K562 (cell line): ENCODE measurements at regions of chrX and their contacts with region 1.

Region 1: DNA sequence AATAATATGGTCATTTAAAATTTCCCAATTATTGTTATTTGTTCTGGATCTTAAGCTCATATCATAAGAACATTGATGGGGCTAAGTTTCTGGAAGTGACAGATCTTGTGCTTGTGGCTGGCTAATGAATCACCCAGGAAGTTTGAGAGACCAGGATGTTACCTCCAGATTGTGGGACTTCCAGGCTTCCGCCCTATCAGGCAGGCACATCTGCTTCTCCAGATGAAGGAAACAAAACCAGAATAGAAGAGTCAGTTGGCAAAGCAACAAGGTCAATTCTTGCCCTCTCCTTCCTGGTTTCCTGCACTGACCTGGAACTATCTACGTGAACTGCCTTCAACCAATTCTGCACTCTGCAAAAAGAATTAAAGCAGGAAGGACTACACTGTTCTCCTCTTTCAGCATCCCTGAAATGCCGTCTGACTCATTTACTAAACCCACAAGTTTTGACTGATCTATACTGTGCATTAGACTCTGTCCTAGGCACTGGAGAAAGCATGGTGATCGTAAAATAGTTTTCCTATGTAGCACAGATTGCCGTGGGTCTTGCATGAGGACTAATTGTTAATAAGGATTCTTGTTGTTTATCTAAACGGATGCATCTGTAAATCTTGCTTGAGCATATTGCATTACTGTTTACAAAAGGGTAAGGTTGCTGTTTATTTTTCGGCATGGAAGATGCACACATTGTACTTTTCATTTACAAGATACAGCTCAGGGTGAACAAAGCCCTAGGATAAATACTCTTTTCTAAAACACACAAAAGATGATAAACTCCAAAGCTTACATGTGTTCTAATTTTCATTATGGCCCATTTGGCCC is 74.6 kb downstream of the AMELX start:
- DNase-seq: peak; percentile 62 to 93 (median 66)
- ATAC-seq: peak; percentile 82
- H3K4me3 ChIP-seq: no peak overlapping the region
- H3K27ac ChIP-seq: peak overlapping the region; percentile 90
- H3K4me1 ChIP-seq: peaks cover 0 to 62% of the 10 kb centered on the region in 2 experiments; a peak in 3 of 5 replicates
- H3K27me3 ChIP-seq: no peaks in the 10 kb centered on the region
- CTCF ChIP-seq: no peak
- EP300 ChIP-seq: peak; percentile 99
- POLR2A ChIP-seq: peak; percentile 44; the same call in 1 of the 2 replicates
- RAD21 ChIP-seq: peak in 1 of 2 experiments; percentile 24; a peak in 2 of 4 replicates

Region 2: DNA sequence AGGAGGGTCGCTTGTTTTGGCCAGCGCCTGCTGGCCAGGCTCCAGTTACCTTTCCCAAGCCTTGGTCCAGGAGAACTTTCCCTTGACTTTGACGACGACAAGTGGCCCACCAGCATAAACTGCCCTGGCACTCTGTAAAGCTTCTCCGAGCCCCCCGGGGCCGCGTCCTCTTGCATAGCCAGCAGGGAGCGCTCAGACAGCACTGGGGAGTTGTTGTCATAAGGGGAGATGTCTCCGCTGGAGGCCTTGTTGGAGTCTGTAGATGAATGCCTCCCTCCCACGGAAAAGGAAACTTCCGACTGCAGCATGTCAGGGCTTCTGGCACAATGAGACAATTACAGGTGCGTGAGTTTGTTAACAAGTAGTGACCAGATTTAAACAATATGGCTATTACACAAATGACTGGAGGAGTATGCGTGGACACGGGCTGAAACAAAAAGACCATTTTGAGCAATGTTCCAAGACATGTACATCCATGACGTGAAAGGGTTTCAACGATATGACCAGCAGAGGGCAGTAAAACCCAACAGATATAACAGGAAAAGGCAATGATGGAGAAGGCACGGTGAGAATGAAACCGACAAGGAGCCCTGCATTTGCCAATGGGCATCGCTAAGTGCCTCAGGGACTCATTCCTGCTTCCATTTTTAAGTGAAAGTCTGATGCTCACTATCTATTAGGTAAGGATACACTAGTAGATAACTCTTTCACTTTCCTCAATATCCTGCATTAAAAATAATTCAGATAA is 223.7 kb before region 1 on chrX:
- CTCF ChIA-PET with region 1: interaction called, 5 read pairs
- POLR2A ChIA-PET with region 1: no interaction called
- in situ Hi-C with region 1: loop called (anchors 5 kb)
- intact Hi-C with region 1: loop called (anchors 5 kb)
- DNase-seq: peak; percentile 39 to 81 (median 53)
- ATAC-seq: peak; percentile 93
- H3K4me3 ChIP-seq: no peak overlapping the region
- H3K27ac ChIP-seq: no peak overlapping the region
- H3K4me1 ChIP-seq: no peaks in the 10 kb centered on the region; a peak in 2 of 5 replicates
- H3K27me3 ChIP-seq: no peaks in the 10 kb centered on the region
- CTCF ChIP-seq: peak; percentile 48 to 74 (median 65); a peak in 5 of 6 replicates
- EP300 ChIP-seq: no peak
- POLR2A ChIP-seq: no peak
- RAD21 ChIP-seq: peak; percentile 71 to 78

Region 3: GRCh38 chrX:11267425-11267824 is 100.4 kb before region 1 on chrX:
- CTCF ChIA-PET with region 1: no interaction called
- POLR2A ChIA-PET with region 1: no interaction called
- in situ Hi-C with region 1: no loop called
- intact Hi-C with region 1: loop called (anchors 5 kb)
- DNase-seq: no peak
- ATAC-seq: no peak
- H3K4me3 ChIP-seq: no peak overlapping the region
- H3K27ac ChIP-seq: no peak overlapping the region
- H3K4me1 ChIP-seq: peaks cover 15 to 76% of the 10 kb centered on the region in 2 experiments
- H3K27me3 ChIP-seq: no peaks in the 10 kb centered on the region
- CTCF ChIP-seq: no peak
- EP300 ChIP-seq: no peak
- POLR2A ChIP-seq: no peak
- RAD21 ChIP-seq: no peak

Region 4: DNA sequence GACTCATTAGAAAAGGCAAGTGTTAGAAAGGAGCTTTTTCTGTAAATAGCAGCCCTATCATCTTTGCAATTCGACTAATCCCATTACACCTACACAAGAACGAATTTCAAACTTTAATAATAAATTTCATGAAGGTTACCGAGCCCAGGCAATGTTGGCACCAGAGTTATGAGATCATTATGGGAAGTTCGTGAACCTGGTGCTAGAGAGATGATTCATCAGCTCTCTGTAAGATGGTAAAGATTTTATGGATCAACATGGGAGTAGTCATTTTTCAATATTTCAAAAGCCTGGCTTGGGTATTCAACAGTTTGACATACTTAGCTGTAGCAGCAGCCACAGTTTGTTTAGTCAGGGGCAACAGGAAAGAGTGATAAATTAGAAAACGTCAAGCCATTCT is 38.8 kb before region 1 on chrX:
- CTCF ChIA-PET with region 1: no interaction called
- POLR2A ChIA-PET with region 1: no interaction called
- in situ Hi-C with region 1: no loop called
- intact Hi-C with region 1: loop called (anchors 5 kb)
- DNase-seq: no peak
- ATAC-seq: no peak
- H3K4me3 ChIP-seq: no peak overlapping the region
- H3K27ac ChIP-seq: no peak overlapping the region; the same call in 2 of the 3 replicates
- H3K4me1 ChIP-seq: peaks cover 0 to 29% of the 10 kb centered on the region in 2 experiments; a peak in 3 of 5 replicates
- H3K27me3 ChIP-seq: no peaks in the 10 kb centered on the region
- CTCF ChIP-seq: no peak
- EP300 ChIP-seq: no peak
- POLR2A ChIP-seq: no peak
- RAD21 ChIP-seq: no peak

Region 5: GRCh38 chrX:11351375-11352295 is 16.2 kb before region 1 on chrX:
- CTCF ChIA-PET with region 1: no interaction called
- POLR2A ChIA-PET with region 1: no interaction called
- in situ Hi-C with region 1: no loop called
- intact Hi-C with region 1: loop called (anchors 1 kb)
- DNase-seq: no peak
- ATAC-seq: peak; percentile 35
- H3K4me3 ChIP-seq: no peak overlapping the region
- H3K27ac ChIP-seq: peak overlapping the region; percentile 92
- H3K4me1 ChIP-seq: peaks cover 10 to 66% of the 10 kb centered on the region in 2 experiments
- H3K27me3 ChIP-seq: no peaks in the 10 kb centered on the region
- CTCF ChIP-seq: no peak
- EP300 ChIP-seq: no peak
- POLR2A ChIP-seq: no peak
- RAD21 ChIP-seq: no peak

Region 6: DNA sequence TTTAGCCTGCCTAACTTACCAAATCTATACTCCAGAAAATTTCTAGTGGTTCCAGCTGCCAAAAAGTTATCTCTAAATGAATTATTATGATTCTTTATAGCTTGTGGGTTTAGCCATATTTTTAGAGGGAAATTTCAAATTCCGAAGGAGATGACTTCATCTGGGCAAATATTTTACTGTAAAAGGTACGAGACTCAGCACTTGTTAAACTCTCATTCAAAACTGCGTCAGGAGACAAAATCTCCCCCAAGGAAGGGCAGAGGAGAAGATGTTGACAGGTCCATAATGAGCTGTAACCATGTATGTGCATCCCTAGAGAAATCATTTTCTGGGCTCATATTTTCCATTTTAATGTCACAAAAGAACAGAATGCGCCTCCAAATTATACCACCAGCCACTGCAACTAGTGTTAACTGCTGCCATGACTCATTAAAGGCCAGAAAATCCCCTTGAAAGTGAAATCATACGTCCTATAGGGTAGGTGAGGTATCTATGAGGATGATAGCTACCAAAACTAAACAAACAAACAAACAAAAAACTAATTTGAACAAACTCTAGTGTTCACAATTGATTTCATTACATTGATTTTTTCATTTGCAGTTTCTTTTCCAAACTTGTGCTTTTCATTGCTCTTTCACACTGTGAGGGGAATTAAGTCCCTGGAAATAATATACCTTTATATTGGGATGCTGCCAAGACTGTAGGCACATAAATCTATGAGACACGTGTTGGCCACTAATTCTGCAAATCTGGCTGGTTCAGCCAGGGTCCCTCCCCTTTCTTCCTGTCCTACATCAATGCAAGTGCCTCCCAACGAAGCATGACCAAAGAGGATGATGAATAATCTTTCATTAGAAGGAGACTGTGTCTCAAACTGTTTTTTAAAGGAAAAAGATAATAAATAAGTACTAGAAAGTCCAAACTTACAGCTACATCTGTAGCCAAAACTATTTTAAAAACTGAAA is 212.1 kb after region 1 on chrX:
- CTCF ChIA-PET with region 1: no interaction called
- POLR2A ChIA-PET with region 1: no interaction called
- in situ Hi-C with region 1: no loop called
- intact Hi-C with region 1: no loop called
- DNase-seq: no peak
- ATAC-seq: no peak
- H3K4me3 ChIP-seq: no peak overlapping the region
- H3K27ac ChIP-seq: no peak overlapping the region
- H3K4me1 ChIP-seq: no peaks in the 10 kb centered on the region
- H3K27me3 ChIP-seq: no peaks in the 10 kb centered on the region
- CTCF ChIP-seq: no peak
- EP300 ChIP-seq: no peak
- POLR2A ChIP-seq: no peak
- RAD21 ChIP-seq: no peak